Mammary epithelial cell (primary cell): ENCODE measurements at regions of chr3 and their contacts with region 1.

Region 1: DNA sequence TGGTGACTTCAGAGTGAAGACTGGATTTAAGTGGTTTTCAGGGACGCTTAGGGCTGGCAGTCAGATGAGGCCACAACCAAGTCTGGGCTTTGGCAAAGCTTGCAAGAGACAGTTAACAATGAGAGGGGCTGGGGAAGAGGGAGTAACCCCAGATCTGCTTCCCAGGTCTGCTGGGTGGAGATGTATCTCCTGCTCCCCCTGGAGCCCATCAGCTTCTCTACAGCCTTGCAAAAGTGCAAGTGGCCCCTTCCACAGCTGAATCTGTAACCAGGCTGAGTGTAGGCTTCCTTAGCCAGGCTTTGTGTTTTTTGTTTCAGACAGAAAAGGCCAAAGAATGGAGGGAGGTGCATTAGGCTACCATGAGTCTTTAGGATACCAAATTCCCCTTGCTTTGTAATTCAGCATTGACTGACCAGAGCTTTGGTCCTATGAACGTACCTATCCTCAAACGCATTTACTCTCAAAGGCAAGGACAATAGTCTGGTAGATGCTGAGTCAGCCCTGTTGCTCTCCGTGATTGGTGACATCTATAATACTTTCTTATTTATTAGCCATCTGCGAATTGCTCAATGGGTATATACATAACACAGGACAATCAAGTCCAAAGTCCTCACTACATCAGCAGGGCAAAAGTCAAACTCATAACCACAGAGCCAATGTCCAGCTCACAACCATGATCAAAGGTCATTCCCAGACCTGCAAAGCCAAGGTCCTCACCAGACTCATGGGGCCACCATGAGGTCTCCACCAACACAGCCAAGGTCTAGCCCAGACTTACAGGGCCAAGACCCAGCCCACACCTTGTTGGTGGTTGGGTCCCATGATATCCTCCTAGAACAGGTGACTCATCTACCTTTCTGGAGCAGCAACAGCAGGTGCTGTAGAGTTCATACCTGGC is 17.1 kb downstream of the CCDC13 start:
- DNase-seq: peak; percentile 14
- H3K4me3 ChIP-seq: no peak overlapping the region
- H3K27ac ChIP-seq: no peak overlapping the region
- H3K4me1 ChIP-seq: no peaks in the 10 kb centered on the region
- H3K27me3 ChIP-seq: no peaks in the 10 kb centered on the region
- CTCF ChIP-seq: peak; percentile 11 to 32

Region 2: DNA sequence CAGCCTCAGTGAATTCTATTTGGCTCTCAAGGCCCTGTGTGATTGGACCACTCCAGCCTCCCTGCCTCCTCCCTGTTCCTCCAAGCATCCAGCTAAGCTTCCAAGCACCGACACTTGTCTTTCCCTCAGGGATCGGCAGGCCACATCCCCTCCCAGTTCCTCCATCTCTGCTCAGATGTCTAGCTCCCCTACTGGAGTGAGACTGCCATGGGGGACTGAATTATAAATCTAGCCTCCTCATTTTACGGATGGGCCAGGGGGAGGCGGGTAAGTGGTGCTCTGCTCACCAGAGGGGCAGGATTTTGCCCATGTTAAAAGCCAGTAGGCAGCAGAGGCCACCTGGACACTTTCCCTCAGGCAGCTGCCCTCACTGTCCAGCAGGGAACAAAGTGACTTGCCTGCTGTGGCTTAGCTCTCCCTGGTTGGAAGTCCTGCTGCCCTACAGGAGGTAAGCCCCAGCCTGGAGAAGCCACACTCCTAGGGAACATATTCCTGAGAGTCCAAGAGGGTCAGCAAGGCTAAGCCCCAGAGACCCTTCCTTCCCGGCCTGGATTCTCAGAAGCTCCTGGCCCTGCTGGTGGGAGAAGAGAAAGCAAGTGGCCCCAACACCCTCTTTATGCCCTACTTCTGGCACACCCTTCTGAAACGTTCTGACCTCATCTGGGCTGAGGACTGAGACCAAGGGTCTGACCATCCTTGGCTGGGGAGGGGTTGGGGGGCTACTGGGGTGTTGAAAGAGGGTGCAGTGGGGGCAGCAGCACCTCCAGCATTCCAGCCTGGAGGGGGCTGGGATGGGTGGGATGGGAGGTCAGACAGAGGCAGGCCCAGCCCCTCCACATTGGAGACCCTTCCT is 44.2 kb before region 1 on chr3:
- CTCF ChIA-PET with region 1: no interaction called
- dilution Hi-C with region 1: loop called (anchors 5 kb)
- in situ Hi-C with region 1: no loop called
- intact Hi-C with region 1: no loop called
- DNase-seq: no peak
- H3K4me3 ChIP-seq: no peak overlapping the region
- H3K27ac ChIP-seq: no peak overlapping the region
- H3K4me1 ChIP-seq: no peaks in the 10 kb centered on the region
- H3K27me3 ChIP-seq: no peaks in the 10 kb centered on the region
- CTCF ChIP-seq: peak in 1 of 2 donors; percentile 15

Region 3: DNA sequence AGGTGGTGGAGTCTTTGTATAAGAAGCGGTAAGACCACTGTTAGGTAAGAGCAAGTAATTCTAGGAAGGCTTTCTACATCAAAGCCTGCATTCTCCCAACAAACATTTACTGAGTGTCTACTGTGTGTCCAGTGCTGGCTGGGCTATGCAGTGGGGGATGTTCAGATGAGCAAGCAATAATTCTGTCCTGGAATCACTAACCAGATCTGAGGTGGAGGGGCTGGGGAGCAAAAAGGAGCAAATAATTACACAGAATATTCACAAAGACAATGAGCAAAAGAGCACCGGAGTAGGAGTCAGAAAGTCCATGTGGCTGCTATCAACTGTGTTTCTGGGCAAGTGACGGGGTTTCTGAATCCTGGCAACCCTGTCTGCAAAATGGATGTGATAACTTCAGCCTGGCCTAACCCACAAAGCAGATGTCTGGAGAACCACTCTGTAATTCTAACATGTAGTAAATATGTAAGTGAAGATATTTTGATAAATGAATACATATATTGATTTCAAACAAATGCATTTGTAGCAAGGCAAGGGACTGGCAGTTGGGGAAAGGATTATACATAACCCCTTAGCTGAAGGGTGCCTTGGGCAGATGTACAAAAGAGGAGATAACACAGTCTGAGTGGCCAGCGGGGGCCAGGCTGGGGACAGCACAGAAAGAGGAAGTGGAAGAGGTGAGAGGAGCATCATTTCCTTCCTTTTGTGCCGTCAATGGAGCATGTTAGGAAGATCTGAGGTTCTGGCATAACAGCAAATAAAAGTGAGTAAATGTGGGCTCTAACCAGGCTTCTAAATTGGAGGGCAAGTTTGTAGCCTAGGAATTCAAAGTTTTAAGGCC is 91.0 kb after region 1 on chr3:
- CTCF ChIA-PET with region 1: no interaction called
- dilution Hi-C with region 1: loop called (anchors 5 kb)
- in situ Hi-C with region 1: no loop called
- intact Hi-C with region 1: no loop called
- DNase-seq: no peak
- H3K4me3 ChIP-seq: no peak overlapping the region
- H3K27ac ChIP-seq: no peak overlapping the region
- H3K4me1 ChIP-seq: no peaks in the 10 kb centered on the region
- H3K27me3 ChIP-seq: no peaks in the 10 kb centered on the region
- CTCF ChIP-seq: no peak

Region 4: GRCh38 chr3:42906070-42906847 is 150.3 kb after region 1 on chr3 and contains the start of gene ZNF662:
- CTCF ChIA-PET with region 1: no interaction called
- dilution Hi-C with region 1: no loop called
- in situ Hi-C with region 1: no loop called
- intact Hi-C with region 1: no loop called
- DNase-seq: no peak
- H3K4me3 ChIP-seq: peak within 1 kb of the TSS in 2 of 3 experiments; percentile 33 to 41
- H3K27ac ChIP-seq: no peak within 1 kb of the TSS
- H3K4me1 ChIP-seq: peaks cover 5% of the 10 kb centered on the region
- H3K27me3 ChIP-seq: peaks cover 22% of the 10 kb centered on the region
- CTCF ChIP-seq: no peak
- total RNA-seq, gene ZNF662: 0.47 to 3.8 TPM